GM12878 (cell line): ENCODE measurements at regions of chr11 and their contacts with region 1.

Region 1: DNA sequence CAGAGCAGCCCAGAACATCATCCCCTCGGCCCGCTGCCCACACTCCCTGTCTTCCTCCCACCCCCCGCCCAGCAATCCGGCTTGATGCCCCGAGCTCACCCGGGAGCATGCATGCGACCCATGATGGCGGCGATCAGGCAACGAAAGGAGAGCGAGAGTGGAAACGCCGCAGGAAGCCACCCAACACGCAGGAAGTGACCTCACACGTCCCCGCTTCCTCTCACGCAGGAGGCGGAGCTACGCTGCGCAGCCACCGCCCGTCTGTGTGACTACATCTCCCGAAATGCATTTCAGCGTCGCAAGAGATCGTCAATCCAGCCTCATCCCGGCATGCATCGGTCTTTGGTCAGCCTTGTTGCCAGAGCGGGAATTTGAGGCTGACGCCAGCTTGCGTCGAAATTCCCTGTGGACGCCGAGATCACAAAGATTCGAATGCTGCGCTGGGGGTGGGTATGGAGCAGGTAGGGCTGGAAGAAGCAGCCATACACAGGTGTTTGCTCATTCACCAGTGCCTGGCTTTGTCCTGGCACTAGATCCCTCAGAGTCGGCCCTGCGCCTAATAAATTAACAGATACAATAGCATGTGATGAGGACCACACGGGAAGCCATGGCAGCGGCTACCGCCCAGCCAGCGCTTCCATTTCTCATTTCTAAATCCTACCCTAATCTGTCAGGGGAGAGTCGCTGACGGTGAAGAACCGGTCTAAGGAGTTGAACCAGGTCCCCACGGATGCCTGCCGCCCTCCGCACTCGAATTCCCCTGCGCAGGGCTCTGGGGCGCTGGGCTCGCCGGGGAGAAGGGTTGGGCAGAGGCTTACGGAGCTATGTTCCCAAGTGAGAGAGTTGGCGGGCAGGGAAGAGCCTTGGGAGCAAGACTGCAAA is at the start of gene RPS13:
- DNase-seq: peak; percentile 97
- ATAC-seq: peak; percentile 93
- H3K4me3 ChIP-seq: peak within 1 kb of the TSS; percentile 90
- H3K27ac ChIP-seq: peak within 1 kb of the TSS; percentile 95
- H3K4me1 ChIP-seq: no peaks in the 10 kb centered on the region; the same call in 1 of the 2 replicates
- H3K27me3 ChIP-seq: no peaks in the 10 kb centered on the region
- CTCF ChIP-seq: no peak
- EP300 ChIP-seq: no peak
- POLR2A ChIP-seq: peak; percentile 100
- RAD21 ChIP-seq: no peak
- polyA plus RNA-seq, gene RPS13: 4,150 to 4,753 TPM

Region 2: GRCh38 chr11:17207317-17208258 is 129.8 kb after region 1 on chr11 and contains the start of gene PIK3C2A:
- CTCF ChIA-PET with region 1: interaction called, 3 read pairs
- POLR2A ChIA-PET with region 1: interaction called, 14 read pairs
- RAD21 ChIA-PET with region 1: interaction called, 9 read pairs
- SMC1A ChIA-PET with region 1: interaction called, 4 read pairs
- in situ Hi-C with region 1: no loop called
- intact Hi-C with region 1: loop called (anchors 2 kb)
- DNase-seq: peak; percentile 64
- ATAC-seq: peak; percentile 98
- H3K4me3 ChIP-seq: peak within 1 kb of the TSS; percentile 95
- H3K27ac ChIP-seq: peak within 1 kb of the TSS; percentile 87
- H3K4me1 ChIP-seq: peaks cover 3% of the 10 kb centered on the region
- H3K27me3 ChIP-seq: no peaks in the 10 kb centered on the region
- CTCF ChIP-seq: no peak
- EP300 ChIP-seq: no peak
- POLR2A ChIP-seq: peak; percentile 97
- RAD21 ChIP-seq: no peak
- polyA plus RNA-seq, gene PIK3C2A: 1.6 to 2.5 TPM

Region 3: GRCh38 chr11:17432002-17432401 is 354.2 kb after region 1 on chr11:
- CTCF ChIA-PET with region 1: no interaction called
- POLR2A ChIA-PET with region 1: no interaction called
- RAD21 ChIA-PET with region 1: no interaction called
- SMC1A ChIA-PET with region 1: no interaction called
- in situ Hi-C with region 1: no loop called
- intact Hi-C with region 1: no loop called
- DNase-seq: no peak
- ATAC-seq: no peak
- H3K4me3 ChIP-seq: no peak overlapping the region
- H3K27ac ChIP-seq: no peak overlapping the region
- H3K4me1 ChIP-seq: no peaks in the 10 kb centered on the region
- H3K27me3 ChIP-seq: peaks cover 6 to 7% of the 10 kb centered on the region in 2 experiments; a peak in 3 of 4 replicates
- CTCF ChIP-seq: no peak
- EP300 ChIP-seq: no peak
- POLR2A ChIP-seq: no peak
- RAD21 ChIP-seq: no peak